ENCODE measurements at regions of chr5 and their contacts with region 1.

Region 1: DNA sequence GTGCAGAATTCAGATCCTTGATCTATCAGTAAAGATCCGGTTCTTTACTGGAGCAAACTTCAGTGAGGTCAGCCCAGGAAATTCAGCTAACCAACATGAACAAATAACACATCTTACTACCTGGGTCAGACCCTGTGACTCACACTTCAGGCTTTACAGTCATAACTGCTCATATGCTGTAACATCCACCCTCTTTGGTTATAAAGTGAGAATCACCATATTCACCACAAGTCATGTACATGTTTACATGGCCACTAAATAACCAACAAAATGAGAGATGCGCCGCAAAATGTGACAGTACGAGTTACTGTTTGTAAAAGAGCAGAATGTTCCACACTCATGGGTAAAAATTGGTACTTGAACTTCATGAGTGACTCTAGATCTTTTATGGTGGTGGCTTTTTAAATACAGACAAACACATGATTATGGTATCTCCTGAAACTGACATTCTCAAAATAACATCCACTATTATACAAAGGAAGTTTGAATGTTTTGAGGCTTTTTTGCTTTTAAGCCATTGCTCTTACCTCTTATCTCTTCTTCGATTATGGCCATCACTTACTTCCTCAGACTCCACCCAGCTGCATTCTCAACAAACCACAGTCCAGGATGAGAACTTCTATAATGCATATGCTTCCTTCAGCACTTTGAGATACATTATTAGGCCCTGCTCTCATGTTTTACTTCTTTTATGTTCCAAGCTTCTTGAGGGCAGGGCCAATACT is 516.6 kb downstream of the RAB3C start:
- DNase-seq: peak; percentile 42 to 84
- ATAC-seq: peak; percentile 88 to 97 (median 96)
- H3K4me3 ChIP-seq: no peak overlapping the region
- H3K4me3 Mint-ChIP-seq: peak overlapping the region; percentile 63
- H3K27ac ChIP-seq: peak overlapping the region; percentile 86
- H3K27ac Mint-ChIP-seq: peak overlapping the region; percentile 88 to 94
- H3K4me1 ChIP-seq: peaks cover 16% of the 10 kb centered on the region
- H3K4me1 Mint-ChIP-seq: peaks cover 43 to 46% of the 10 kb centered on the region in 2 donors
- H3K27me3 ChIP-seq: no peaks in the 10 kb centered on the region
- H3K27me3 Mint-ChIP-seq: no peaks in the 10 kb centered on the region
- CTCF ChIP-seq: no peak

Region 2: DNA sequence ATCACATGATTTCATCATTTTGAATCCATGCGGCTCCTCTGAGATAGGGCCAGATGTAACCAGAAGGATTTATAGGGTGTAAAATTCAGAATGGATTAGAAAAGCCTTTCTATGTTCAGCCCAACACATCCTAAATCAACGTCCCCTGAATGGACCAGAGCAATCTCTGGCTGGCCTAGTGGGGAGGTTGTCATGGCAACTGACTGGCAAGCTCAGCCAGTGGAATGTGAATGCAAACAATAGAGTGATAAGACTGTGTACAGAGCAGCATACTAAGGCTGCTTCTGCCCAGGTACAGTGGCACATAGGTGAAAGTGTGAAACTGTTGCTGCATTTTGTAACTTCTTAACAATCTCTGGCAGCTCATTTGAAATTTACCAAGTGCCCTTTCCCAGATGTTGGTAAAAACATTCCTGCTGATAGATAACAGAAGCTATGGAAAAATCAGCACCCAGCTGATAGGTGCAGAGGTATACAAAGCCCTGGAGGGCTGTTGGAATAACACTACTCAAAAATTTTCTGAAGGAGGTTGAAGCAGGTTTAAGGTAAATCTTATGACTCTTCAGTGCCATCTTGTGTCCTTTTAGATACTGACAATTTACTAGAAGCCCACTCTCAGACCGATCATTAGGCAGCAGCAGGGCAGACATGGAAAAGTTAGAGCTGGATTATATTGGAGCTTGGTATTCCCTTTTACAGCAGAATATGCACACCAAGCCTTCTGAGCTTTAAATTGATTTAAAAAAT is 249.3 kb before region 1 on chr5:
- intact Hi-C with region 1: no loop called
- DNase-seq: peak in 1 of 2 donors; percentile 31
- ATAC-seq: peak in 1 of 3 donors; percentile 28
- H3K4me3 ChIP-seq: no peak overlapping the region
- H3K4me3 Mint-ChIP-seq: no peak overlapping the region
- H3K27ac ChIP-seq: no peak overlapping the region
- H3K27ac Mint-ChIP-seq: no peak overlapping the region
- H3K4me1 ChIP-seq: no peaks in the 10 kb centered on the region
- H3K4me1 Mint-ChIP-seq: no peaks in the 10 kb centered on the region
- H3K27me3 ChIP-seq: no peaks in the 10 kb centered on the region
- H3K27me3 Mint-ChIP-seq: peaks cover 9 to 10% of the 10 kb centered on the region in 2 donors
- CTCF ChIP-seq: no peak

Region 3: DNA sequence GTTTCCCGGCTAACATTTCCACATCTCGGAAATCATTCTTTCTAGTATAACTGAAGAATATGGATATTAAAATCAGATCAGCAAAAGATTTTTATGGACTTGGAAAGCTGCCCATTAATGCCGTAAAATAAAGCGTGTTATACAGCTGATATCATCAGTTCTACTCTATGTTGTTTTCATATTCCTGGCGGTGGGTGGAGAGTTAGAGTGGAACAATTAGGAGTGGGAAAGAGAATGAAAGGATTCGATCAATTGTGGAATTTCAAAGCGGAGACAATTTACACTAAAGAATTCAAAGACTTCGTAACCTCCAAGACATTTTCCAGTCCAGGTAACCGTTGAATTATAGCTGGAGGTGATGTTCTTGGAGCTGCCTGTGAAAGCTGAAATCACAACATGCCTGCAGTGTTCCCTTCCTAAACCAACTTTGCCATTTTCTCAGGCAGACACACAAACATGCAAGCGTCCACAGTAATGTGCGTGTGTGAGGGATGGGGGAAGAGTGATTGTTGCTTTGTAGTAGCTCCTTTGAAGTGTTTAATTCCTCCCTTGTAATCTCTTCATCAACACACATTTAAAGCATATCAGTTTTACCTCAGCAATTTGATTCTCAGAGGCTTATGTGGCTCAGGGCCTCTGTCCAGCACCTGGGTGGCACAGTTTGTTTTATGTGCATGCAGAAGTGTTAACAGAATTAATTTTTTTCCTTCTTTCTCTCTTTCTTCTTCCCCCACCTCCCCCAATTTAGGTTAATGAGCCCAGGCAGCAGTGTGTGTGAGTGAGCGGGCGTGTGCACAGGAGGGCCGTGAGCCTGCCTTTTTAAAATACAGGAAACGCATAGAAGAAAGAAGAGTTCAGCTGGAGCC is 27.5 kb after region 1 on chr5:
- intact Hi-C with region 1: loop called (anchors 1 kb)
- DNase-seq: peak in 1 of 2 donors; percentile 76
- ATAC-seq: no peak
- H3K4me3 ChIP-seq: peak overlapping the region; percentile 17
- H3K4me3 Mint-ChIP-seq: no peak overlapping the region
- H3K27ac ChIP-seq: peak overlapping the region; percentile 80
- H3K27ac Mint-ChIP-seq: no peak overlapping the region
- H3K4me1 ChIP-seq: peaks cover 26% of the 10 kb centered on the region
- H3K4me1 Mint-ChIP-seq: peaks cover 0 to 5% of the 10 kb centered on the region in 2 donors
- H3K27me3 ChIP-seq: no peaks in the 10 kb centered on the region
- H3K27me3 Mint-ChIP-seq: no peaks in the 10 kb centered on the region
- CTCF ChIP-seq: no peak

Region 4: DNA sequence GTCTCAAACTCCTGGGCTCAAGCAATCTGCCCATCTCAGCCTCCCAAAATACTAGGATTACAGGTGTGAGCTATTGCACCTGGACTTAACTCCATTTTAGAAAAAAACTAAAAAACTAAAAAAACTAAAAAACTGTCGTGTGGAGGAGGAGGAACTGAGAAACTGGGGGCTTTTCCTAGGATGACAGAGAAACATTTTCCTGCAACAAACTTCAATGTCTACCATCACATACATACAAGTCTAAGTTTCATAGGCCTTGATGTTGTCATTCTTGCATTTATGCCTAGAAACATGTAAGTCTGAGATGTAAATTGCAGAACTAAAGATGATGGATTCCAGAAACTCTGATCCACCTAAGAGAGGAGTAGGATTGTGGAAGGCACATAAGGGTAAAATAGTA is 40.3 kb after region 1 on chr5:
- intact Hi-C with region 1: no loop called
- DNase-seq: no peak
- ATAC-seq: no peak
- H3K4me3 ChIP-seq: no peak overlapping the region
- H3K4me3 Mint-ChIP-seq: no peak overlapping the region
- H3K27ac ChIP-seq: no peak overlapping the region
- H3K27ac Mint-ChIP-seq: no peak overlapping the region
- H3K4me1 ChIP-seq: no peaks in the 10 kb centered on the region
- H3K4me1 Mint-ChIP-seq: peaks cover 4 to 5% of the 10 kb centered on the region in 2 donors
- H3K27me3 ChIP-seq: no peaks in the 10 kb centered on the region
- H3K27me3 Mint-ChIP-seq: peaks cover 2 to 8% of the 10 kb centered on the region in 2 donors
- CTCF ChIP-seq: no peak

Region 5: DNA sequence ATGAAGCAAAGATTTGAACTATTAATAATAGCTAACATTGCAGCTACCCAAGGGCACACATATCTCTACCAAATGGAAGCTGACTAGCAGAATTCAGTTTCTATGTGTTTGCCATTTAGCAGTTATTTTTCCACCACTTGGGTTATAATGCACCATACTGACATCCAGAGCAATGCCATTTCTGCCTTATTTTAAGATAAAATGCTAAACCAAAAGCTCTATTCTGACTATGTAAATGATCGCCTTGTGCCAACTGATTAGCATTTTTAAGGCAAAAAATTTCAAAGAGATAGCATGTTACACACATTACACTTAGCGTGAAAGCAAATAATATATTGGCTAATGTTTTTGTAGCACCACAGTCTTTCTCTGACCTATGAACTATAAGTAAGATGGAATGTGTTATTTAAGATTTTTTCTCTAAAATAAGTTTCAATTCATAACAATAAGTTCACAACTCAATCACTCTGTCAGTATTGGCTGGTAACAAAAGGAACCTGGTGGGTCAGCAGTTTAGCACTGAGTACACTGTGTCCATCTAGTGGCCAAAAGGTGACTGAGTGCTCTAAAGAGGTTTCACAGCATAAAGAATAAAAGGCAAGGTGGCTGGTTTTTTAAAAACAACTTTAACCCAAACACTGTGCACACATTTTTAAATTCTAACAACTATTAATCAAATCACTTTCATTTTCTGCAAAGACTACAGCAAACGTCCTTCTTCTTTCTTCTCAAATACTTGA is 350.6 kb after region 1 on chr5:
- intact Hi-C with region 1: no loop called
- DNase-seq: no peak
- ATAC-seq: no peak
- H3K4me3 ChIP-seq: no peak overlapping the region
- H3K4me3 Mint-ChIP-seq: no peak overlapping the region
- H3K27ac ChIP-seq: no peak overlapping the region
- H3K27ac Mint-ChIP-seq: no peak overlapping the region
- H3K4me1 ChIP-seq: no peaks in the 10 kb centered on the region
- H3K4me1 Mint-ChIP-seq: no peaks in the 10 kb centered on the region
- H3K27me3 ChIP-seq: no peaks in the 10 kb centered on the region
- H3K27me3 Mint-ChIP-seq: peaks cover 0 to 6% of the 10 kb centered on the region in 2 donors
- CTCF ChIP-seq: no peak